T-cell (primary cell): ENCODE measurements at regions of chr13 and their contacts with region 1.

Region 1: DNA sequence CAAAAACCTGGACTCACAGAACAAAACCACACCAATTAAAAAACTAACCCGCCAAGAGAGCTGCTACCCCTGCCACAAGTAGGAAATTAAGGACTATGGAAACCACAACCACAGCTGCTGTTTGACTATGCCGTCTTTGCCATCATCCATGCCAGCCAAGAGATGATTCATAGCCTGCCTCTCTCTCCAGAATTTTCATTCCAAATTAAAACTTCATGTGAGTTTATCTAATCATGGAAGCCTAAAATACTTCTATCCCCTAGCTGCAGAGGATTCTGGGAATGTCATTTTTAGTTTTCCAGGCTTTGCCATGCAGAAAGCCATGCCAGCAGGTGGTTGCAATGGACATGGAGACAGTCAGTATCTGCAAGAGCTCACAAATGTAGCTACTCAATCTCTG is 27.6 kb upstream of the GTF2F2 start:
- DNase-seq: no peak
- ATAC-seq: no peak
- H3K4me3 ChIP-seq: no peak overlapping the region
- H3K4me3 Mint-ChIP-seq: no peak overlapping the region
- H3K27ac ChIP-seq: no peak overlapping the region
- H3K27ac Mint-ChIP-seq: no peak overlapping the region
- H3K4me1 ChIP-seq: no peaks in the 10 kb centered on the region
- H3K4me1 Mint-ChIP-seq: no peaks in the 10 kb centered on the region
- H3K27me3 ChIP-seq: peaks cover 0 to 7% of the 10 kb centered on the region in 2 experiments
- H3K27me3 Mint-ChIP-seq: peaks cover 0 to 5% of the 10 kb centered on the region in 2 donors

Region 2: DNA sequence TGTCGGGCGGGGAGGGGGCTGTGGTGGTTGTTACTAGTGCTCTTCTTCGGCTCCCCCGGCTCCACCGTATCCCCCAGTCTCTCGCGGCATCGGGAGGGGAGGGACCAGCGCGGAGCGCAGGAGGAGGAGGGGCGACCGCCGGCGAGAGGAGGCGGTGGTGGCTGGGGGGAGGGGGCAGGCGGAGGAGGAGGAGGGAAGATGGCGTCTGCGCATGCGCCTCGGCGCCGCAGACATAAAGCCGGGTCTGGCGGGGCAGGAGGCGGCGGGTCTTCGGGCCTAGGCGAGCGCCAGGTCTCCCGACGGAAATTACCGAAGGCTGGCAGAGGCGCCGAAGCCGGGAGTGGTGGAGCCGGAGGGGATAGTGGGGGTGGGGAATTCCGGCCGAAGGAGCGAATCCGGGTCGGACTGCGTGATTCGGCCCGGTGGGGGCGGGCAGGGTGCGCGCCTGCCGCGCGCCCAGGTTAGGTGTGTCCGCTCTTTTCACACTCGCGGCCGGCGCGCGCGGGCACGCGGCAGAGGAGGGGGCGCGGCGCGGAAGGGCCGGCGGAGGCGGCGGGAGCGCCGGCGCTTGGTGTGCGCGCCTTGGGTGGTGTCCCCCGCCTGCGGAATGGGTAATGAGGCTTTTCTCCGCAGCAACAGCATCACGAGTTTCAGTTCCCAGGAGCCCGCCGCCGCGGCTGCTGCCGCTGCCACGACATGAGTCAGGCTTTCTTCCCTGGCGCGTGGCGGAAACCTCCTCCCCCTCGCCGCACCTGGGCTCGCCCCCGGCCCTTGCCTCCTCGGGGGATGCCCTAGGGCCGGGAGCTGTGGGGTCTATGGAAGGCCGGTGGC is 515.2 kb before region 1 on chr13:
- CTCF ChIA-PET with region 1: no interaction called
- POLR2A ChIA-PET with region 1: interaction called in 1 of 2 experiments, 12 read pairs
- DNase-seq: peak; percentile 85 to 97 (median 94)
- ATAC-seq: peak; percentile 71 to 80 (median 75)
- H3K4me3 ChIP-seq: peak overlapping the region; percentile 77 to 92
- H3K4me3 Mint-ChIP-seq: peak overlapping the region; percentile 91 to 98 (median 93)
- H3K27ac ChIP-seq: peak overlapping the region; percentile 91
- H3K27ac Mint-ChIP-seq: peak overlapping the region; percentile 90
- H3K4me1 ChIP-seq: peaks cover 8 to 34% of the 10 kb centered on the region in 2 experiments
- H3K4me1 Mint-ChIP-seq: peaks cover 31 to 38% (median 38%) of the 10 kb centered on the region in 3 donors
- H3K27me3 ChIP-seq: no peaks in the 10 kb centered on the region
- H3K27me3 Mint-ChIP-seq: no peaks in the 10 kb centered on the region

Region 3: DNA sequence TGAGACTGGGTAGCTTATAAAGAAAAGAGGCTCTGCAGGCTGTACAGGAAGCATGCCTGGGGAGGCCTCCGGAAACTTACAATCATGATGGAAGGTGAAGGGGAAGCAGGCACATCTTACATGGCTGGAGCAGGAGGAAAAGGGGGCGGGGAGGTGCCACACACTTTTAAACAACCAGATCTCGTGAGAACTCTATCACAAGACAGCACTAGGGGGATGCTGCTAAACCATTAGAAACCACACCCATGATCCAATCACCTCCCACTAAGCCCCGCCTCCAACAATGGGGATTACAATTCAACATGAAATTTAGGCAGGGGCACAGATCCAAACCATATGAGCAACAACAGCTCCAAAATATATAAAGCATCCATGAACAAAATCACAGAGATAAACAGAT is 18.9 kb before region 1 on chr13:
- CTCF ChIA-PET with region 1: no interaction called
- POLR2A ChIA-PET with region 1: no interaction called
- DNase-seq: no peak
- ATAC-seq: no peak
- H3K4me3 ChIP-seq: no peak overlapping the region
- H3K4me3 Mint-ChIP-seq: no peak overlapping the region
- H3K27ac ChIP-seq: no peak overlapping the region
- H3K27ac Mint-ChIP-seq: no peak overlapping the region
- H3K4me1 ChIP-seq: no peaks in the 10 kb centered on the region
- H3K4me1 Mint-ChIP-seq: peaks cover 0 to 3% (median 0%) of the 10 kb centered on the region in 3 donors
- H3K27me3 ChIP-seq: peaks cover 0 to 6% of the 10 kb centered on the region in 2 experiments
- H3K27me3 Mint-ChIP-seq: peaks cover 9 to 11% of the 10 kb centered on the region in 2 donors

Region 4: GRCh38 chr13:45149964-45150363 is 57.3 kb after region 1 on chr13:
- CTCF ChIA-PET with region 1: no interaction called
- POLR2A ChIA-PET with region 1: no interaction called
- DNase-seq: no peak
- ATAC-seq: no peak
- H3K4me3 ChIP-seq: no peak overlapping the region
- H3K4me3 Mint-ChIP-seq: no peak overlapping the region
- H3K27ac ChIP-seq: no peak overlapping the region
- H3K27ac Mint-ChIP-seq: no peak overlapping the region
- H3K4me1 ChIP-seq: peaks cover 0 to 4% of the 10 kb centered on the region in 2 experiments
- H3K4me1 Mint-ChIP-seq: peaks cover 17 to 24% (median 23%) of the 10 kb centered on the region in 3 donors
- H3K27me3 ChIP-seq: no peaks in the 10 kb centered on the region
- H3K27me3 Mint-ChIP-seq: no peaks in the 10 kb centered on the region